ENCODE measurements at regions of chr18 and their contacts with region 1.

Region 1: GRCh38 chr18:3665780-3666525 is 216.0 kb downstream of the TGIF1 start:
- DNase-seq: peak; percentile 81 to 86
- H3K4me3 ChIP-seq: peak overlapping the region in 2 of 4 experiments; percentile 27 to 45; a peak in 3 of 8 replicates
- H3K27ac ChIP-seq: no peak overlapping the region; the same call in 1 of the 2 replicates
- H3K4me1 ChIP-seq: peaks cover 3 to 13% (median 9%) of the 10 kb centered on the region in 4 experiments; a peak in 6 of 7 replicates
- H3K27me3 ChIP-seq: no peaks in the 10 kb centered on the region
- CTCF ChIP-seq: peak; percentile 82 to 91 (median 86)
- EP300 ChIP-seq: no peak; a peak in 1 of 3 replicates
- POLR2A ChIP-seq: peak in 1 of 2 experiments; percentile 69; a peak in 2 of 3 replicates
- RAD21 ChIP-seq: peak; percentile 96 to 98

Region 2: GRCh38 chr18:3281456-3282400 is 384.2 kb before region 1 on chr18:
- CTCF ChIA-PET with region 1: interaction called, 39 read pairs
- POLR2A ChIA-PET with region 1: interaction called, 5 read pairs
- DNase-seq: no peak
- H3K4me3 ChIP-seq: no peak overlapping the region
- H3K27ac ChIP-seq: no peak overlapping the region
- H3K4me1 ChIP-seq: peaks cover 0 to 7% (median 2%) of the 10 kb centered on the region in 4 experiments; a peak in 3 of 7 replicates
- H3K27me3 ChIP-seq: no peaks in the 10 kb centered on the region
- CTCF ChIP-seq: peak in 2 of 3 experiments; percentile 34 to 53; a peak in 2 of 4 replicates
- EP300 ChIP-seq: no peak
- POLR2A ChIP-seq: no peak
- RAD21 ChIP-seq: peak; percentile 74 to 85

Region 3: DNA sequence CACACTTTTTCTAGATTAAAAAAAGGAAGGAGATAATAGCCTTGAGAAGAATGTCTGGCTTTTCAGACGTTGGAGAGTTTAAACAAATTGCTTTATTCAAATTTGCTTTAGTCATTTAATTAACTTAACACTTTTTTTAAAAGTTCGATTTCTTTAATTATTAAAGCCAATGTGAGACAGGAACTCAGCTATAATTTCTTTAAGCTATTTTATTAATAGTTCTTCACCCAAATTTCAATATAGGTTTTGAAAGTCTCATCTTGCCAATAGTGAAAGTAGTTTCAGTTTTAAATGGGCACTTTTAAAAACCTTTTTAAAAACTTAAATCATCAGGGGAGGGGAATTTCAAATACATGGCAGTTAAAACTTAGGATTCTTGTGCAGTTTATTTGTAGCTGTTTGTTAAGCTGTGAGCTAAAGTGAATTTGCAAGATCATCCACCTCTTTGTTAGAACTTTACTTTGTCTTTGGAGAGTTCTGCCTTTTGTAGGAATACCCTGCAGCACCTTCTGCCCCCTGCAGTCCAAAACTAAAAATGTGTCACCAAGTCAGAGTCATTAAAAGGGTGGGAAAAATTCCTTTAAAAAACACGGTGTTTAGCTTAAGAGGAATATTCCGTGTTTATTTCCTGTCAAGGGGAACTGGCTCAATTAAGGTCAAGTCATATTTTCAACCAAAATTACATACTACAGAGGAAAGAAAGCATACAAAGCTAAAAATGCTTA is 211.4 kb before region 1 on chr18:
- CTCF ChIA-PET with region 1: interaction called, 28 read pairs
- POLR2A ChIA-PET with region 1: interaction called, 15 read pairs
- DNase-seq: no peak
- H3K4me3 ChIP-seq: peak overlapping the region; percentile 25 to 99 (median 63); a peak in 7 of 8 replicates
- H3K27ac ChIP-seq: peak overlapping the region; percentile 35; the same call in 1 of the 2 replicates
- H3K4me1 ChIP-seq: peaks cover 11 to 25% (median 23%) of the 10 kb centered on the region in 4 experiments; a peak in 6 of 7 replicates
- H3K27me3 ChIP-seq: no peaks in the 10 kb centered on the region
- CTCF ChIP-seq: peak in 2 of 3 experiments; percentile 47 to 67; a peak in 2 of 4 replicates
- EP300 ChIP-seq: no peak
- POLR2A ChIP-seq: peak in 1 of 2 experiments; percentile 36; a peak in 2 of 3 replicates
- RAD21 ChIP-seq: peak; percentile 62 to 65

Region 4: GRCh38 chr18:3593904-3594661 is 71.9 kb before region 1 on chr18:
- CTCF ChIA-PET with region 1: interaction called, 66 read pairs
- POLR2A ChIA-PET with region 1: interaction called, 9 read pairs
- DNase-seq: peak; percentile 77 to 95
- H3K4me3 ChIP-seq: peak overlapping the region; percentile 17 to 53 (median 46); a peak in 6 of 8 replicates
- H3K27ac ChIP-seq: no peak overlapping the region; the same call in 1 of the 2 replicates
- H3K4me1 ChIP-seq: peaks cover 15 to 35% (median 24%) of the 10 kb centered on the region in 4 experiments
- H3K27me3 ChIP-seq: peaks cover 0 to 15% (median 8%) of the 10 kb centered on the region in 4 experiments; a peak in 6 of 7 replicates
- CTCF ChIP-seq: peak; percentile 73 to 89 (median 88)
- EP300 ChIP-seq: no peak
- POLR2A ChIP-seq: no peak
- RAD21 ChIP-seq: peak; percentile 71 to 75

Region 5: DNA sequence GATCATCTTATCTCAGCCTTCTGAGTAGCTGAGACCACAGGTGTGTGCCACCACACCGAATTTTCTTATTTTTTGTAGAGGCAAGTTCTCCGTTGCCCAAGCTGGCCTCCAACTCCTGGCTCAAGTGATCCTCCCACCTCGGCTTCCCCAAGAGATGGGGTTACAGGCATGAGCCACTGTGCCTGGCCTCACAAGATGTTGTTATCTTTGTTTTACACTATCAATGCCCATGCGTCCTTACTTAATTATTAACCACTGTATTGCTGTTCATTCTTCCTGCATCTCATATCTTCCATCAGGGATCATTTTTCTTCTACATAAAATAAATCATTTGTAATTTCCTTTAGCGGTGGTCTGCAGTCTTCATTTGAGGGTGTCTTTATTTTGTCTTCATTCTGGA is 34.1 kb before region 1 on chr18:
- CTCF ChIA-PET with region 1: interaction called, 12 read pairs
- POLR2A ChIA-PET with region 1: interaction called, 4 read pairs
- DNase-seq: no peak
- H3K4me3 ChIP-seq: no peak overlapping the region
- H3K27ac ChIP-seq: no peak overlapping the region
- H3K4me1 ChIP-seq: no peaks in the 10 kb centered on the region
- H3K27me3 ChIP-seq: no peaks in the 10 kb centered on the region
- CTCF ChIP-seq: no peak
- EP300 ChIP-seq: no peak
- POLR2A ChIP-seq: no peak
- RAD21 ChIP-seq: no peak

Region 6: DNA sequence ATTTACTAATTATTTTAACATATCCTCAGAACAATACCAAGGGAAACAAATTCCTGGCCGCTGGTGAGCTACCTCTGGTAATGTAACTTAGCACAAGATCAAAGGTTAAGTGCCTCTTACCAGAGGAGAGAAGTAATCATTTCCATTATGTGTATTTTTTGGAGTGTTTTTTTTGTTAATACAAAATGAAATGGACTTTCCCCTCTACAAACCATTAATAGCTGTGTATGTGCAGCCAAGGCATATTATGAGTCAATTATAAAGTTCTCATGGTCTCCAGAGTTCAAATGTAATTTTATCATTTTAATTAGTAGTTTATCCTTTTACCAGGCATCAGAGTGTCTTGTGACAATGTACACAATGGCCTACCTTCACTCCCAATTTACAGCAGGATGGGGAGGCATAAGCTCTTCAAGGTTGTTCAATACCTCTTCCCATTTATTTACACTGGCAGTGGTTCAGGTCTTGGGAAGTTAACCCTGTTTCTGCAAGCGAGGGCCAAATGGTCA is 26.2 kb after region 1 on chr18:
- CTCF ChIA-PET with region 1: interaction called, 10 read pairs
- POLR2A ChIA-PET with region 1: interaction called, 4 read pairs
- DNase-seq: no peak
- H3K4me3 ChIP-seq: no peak overlapping the region
- H3K27ac ChIP-seq: no peak overlapping the region
- H3K4me1 ChIP-seq: peaks cover 0 to 6% (median 0%) of the 10 kb centered on the region in 4 experiments; a peak in 2 of 7 replicates
- H3K27me3 ChIP-seq: no peaks in the 10 kb centered on the region
- CTCF ChIP-seq: no peak
- EP300 ChIP-seq: no peak
- POLR2A ChIP-seq: no peak
- RAD21 ChIP-seq: no peak